ENCODE measurements at regions of chr13 and their contacts with region 1.

Region 1: DNA sequence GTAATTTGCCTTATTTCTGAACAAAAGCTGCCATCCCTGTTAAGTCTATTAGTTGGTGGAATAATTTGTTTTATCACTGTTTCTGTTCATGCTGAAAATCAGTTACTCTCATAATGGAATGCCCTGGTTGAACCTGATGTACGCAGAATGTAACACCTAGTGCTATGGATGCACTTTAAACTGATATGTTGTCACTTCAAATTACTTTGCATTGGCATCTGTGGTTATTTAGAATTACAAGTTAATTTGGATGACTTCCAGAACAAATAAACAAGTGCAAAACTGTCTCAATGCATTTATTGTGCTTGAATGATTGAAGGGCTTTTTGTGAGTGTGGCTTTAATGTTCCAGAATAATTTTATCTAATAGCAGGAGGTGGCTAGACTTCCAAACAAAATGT is 368.2 kb upstream of the SLITRK5 start:
- DNase-seq: no peak
- H3K4me3 ChIP-seq: no peak overlapping the region
- H3K27ac ChIP-seq: no peak overlapping the region
- H3K4me1 ChIP-seq: no peaks in the 10 kb centered on the region
- CTCF ChIP-seq: no peak

Region 2: GRCh38 chr13:87287721-87288120 is 15.2 kb before region 1 on chr13:
- CTCF ChIA-PET with region 1: no interaction called
- POLR2A ChIA-PET with region 1: interaction called, 11 read pairs
- intact Hi-C with region 1: no loop called
- DNase-seq: no peak
- H3K4me3 ChIP-seq: no peak overlapping the region
- H3K27ac ChIP-seq: no peak overlapping the region
- H3K4me1 ChIP-seq: peaks cover 19% of the 10 kb centered on the region
- CTCF ChIP-seq: no peak

Measured in OCI-LY7 (cell line).